ENCODE measurements at regions of chr18 and their contacts with region 1.

Region 1: DNA sequence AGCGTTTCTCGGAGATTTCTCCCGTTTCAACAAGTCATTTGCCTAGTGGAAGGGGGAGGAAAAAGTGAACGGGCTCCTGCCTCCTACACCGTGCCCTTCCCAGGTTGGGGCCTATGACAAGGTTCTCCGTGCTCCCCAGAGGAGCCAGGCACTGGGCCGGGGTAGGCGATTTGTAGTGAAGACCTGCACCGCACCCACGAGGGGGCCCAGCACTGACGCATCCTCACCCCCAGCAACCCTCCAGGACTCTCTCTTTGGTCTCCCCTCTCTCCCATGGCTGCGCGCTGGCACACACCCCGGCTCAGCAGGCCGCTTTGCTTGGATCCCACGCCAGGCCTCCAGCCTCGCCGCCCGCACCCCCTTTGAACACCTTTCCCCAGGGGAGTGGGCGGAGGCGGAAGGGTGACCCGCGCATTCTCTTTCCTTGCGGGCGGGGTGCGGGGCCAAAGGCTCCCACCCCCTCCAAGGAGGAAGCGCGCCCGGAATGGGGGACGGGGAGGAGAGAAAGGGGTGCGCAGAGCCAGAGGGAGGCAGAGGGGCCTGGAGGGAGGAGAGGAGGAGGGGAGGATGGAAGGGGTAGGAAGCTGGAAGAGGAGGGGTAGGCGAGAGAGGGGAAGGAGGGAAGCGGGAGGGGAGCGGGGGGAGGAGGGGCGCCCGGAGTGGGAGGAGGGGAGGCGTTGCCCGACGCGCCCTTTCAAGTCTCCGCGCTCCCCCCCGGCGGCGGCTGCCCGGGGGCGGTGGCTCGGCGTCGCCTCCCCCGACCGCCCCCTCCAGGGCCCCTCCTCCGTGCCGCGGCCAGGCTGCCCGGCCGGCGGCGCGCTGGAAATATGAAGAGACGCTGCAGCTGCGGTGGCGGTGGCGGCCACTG is at the start of gene APCDD1:
- DNase-seq: peak; percentile 67 to 80
- ATAC-seq: peak; percentile 78 to 93 (median 86)
- H3K4me3 ChIP-seq: peak within 1 kb of the TSS; percentile 53 to 79 (median 68)
- H3K27ac ChIP-seq: peak within 1 kb of the TSS; percentile 74 to 87 (median 80)
- H3K4me1 ChIP-seq: peaks cover 0 to 42% (median 21%) of the 10 kb centered on the region in 9 donors
- H3K27me3 ChIP-seq: peaks cover 0 to 54% (median 0%) of the 10 kb centered on the region in 7 donors
- CTCF ChIP-seq: peak in 1 of 9 donors; percentile 14
- total RNA-seq, gene APCDD1: 10.2 to 36.4 (median 17.6) TPM

Region 2: GRCh38 chr18:10015941-10016819 is 437.9 kb before region 1 on chr18:
- intact Hi-C with region 1: loop called in 1 of 10 experiments (anchors 10 kb)
- DNase-seq: peak in 1 of 2 donors; percentile 56
- ATAC-seq: peak; percentile 70 to 88 (median 84)
- H3K4me3 ChIP-seq: no peak overlapping the region
- H3K27ac ChIP-seq: peak overlapping the region; percentile 56 to 87 (median 70)
- H3K4me1 ChIP-seq: peaks cover 4 to 54% (median 42%) of the 10 kb centered on the region in 9 donors
- H3K27me3 ChIP-seq: no peaks in the 10 kb centered on the region
- CTCF ChIP-seq: peak in 7 of 9 donors; percentile 7 to 64 (median 47)

Region 3: GRCh38 chr18:10343778-10344177 is 110.3 kb before region 1 on chr18:
- intact Hi-C with region 1: no loop called
- DNase-seq: no peak
- ATAC-seq: peak in 3 of 8 donors; percentile 22 to 42 (median 41)
- H3K4me3 ChIP-seq: no peak overlapping the region
- H3K27ac ChIP-seq: no peak overlapping the region
- H3K4me1 ChIP-seq: no peaks in the 10 kb centered on the region
- H3K27me3 ChIP-seq: no peaks in the 10 kb centered on the region
- CTCF ChIP-seq: no peak

Region 4: DNA sequence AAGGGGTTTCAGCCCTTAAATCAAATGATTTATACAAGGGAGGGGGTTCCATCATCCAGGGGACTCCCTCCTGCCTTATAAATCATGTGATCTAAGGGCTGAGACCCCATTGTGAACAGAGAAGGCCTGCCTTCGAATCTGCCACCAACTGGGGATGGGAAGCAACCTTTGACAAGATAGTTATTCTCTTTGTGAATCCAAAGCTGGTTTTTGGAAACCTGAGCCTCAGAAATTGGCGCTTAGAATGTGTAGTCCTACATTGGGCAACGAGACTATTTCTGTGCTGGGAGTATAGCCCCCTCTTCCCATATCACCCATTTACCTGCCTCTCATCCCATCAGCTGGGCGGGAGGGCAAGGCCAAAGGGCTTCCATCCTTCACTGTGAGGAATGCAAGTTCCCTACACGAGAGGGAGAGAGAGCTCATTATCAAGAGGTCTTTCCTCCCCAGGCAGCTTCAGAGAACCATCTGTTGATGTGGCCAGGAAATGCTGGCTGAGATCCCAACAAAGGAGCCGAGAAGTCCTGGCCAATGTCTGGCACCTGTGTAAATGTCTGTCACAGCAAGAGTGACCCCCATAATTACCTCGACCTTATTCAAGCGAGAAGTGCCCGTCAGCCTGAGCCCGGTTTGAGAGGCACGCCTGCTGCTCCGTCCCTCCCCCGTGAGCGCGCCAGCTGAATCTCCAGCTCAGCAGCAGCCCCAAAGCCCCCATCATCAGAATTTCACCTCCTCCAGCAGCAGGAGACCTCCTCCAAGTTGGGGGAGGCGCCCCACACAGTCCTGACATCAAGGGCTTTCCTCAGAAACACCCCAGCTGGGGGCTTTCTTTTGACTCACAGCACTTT is 48.0 kb before region 1 on chr18:
- intact Hi-C with region 1: loop called in 1 of 10 experiments (anchors 5 kb)
- DNase-seq: peak in 1 of 2 donors; percentile 29
- ATAC-seq: peak in 6 of 8 donors; percentile 22 to 60 (median 46)
- H3K4me3 ChIP-seq: no peak overlapping the region
- H3K27ac ChIP-seq: no peak overlapping the region
- H3K4me1 ChIP-seq: peaks cover 0 to 21% (median 14%) of the 10 kb centered on the region in 9 donors
- H3K27me3 ChIP-seq: no peaks in the 10 kb centered on the region
- CTCF ChIP-seq: no peak

Region 5: GRCh38 chr18:10470429-10470828 is 16.4 kb after region 1 on chr18:
- intact Hi-C with region 1: loop called in 1 of 10 experiments (anchors 1 kb)
- DNase-seq: no peak
- ATAC-seq: no peak
- H3K4me3 ChIP-seq: no peak overlapping the region
- H3K27ac ChIP-seq: no peak overlapping the region
- H3K4me1 ChIP-seq: peaks cover 0 to 8% (median 4%) of the 10 kb centered on the region in 9 donors
- H3K27me3 ChIP-seq: no peaks in the 10 kb centered on the region
- CTCF ChIP-seq: no peak

Measured in heart right ventricle (tissue), 16 donors.